AG04449 (cell line): ENCODE measurements at regions of chr15 and their contacts with region 1.

Region 1: GRCh38 chr15:67433495-67434099 is 87.3 kb upstream of the C15orf61 start:
- DNase-seq: no peak
- H3K4me3 ChIP-seq: no peak overlapping the region
- CTCF ChIP-seq: peak; percentile 83

Region 2: DNA sequence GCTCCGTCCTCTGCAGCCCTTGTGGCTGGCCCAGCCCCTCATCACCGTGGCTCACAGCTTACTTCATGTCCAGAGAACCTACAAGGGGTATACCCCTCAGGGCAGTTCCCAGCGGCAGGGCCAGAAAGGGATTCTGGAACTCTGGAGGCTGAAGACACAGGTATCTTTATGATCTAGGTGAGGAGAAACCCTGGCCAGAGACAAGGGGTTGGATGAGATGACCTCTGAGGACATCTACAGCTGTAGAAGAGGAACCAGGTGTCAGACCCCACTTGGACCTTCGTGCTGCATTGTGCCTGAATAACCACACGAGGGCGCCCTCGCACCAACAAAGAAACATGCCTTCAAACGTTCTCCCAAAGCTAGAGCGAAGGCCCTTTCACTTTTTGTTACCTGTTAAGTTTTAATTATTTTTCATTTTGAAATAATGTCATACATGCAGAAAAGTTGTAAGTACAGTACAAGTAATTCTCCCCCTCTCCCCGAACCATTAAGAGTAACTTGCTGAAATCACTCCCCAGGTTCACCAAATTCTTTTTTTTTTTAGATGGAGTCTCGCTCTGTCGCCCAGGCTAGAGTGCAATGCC is 486.9 kb before region 1 on chr15:
- CTCF ChIA-PET with region 1: interaction called, 39 read pairs
- POLR2A ChIA-PET with region 1: no interaction called
- DNase-seq: no peak
- H3K4me3 ChIP-seq: no peak overlapping the region
- CTCF ChIP-seq: peak; percentile 83

Region 3: DNA sequence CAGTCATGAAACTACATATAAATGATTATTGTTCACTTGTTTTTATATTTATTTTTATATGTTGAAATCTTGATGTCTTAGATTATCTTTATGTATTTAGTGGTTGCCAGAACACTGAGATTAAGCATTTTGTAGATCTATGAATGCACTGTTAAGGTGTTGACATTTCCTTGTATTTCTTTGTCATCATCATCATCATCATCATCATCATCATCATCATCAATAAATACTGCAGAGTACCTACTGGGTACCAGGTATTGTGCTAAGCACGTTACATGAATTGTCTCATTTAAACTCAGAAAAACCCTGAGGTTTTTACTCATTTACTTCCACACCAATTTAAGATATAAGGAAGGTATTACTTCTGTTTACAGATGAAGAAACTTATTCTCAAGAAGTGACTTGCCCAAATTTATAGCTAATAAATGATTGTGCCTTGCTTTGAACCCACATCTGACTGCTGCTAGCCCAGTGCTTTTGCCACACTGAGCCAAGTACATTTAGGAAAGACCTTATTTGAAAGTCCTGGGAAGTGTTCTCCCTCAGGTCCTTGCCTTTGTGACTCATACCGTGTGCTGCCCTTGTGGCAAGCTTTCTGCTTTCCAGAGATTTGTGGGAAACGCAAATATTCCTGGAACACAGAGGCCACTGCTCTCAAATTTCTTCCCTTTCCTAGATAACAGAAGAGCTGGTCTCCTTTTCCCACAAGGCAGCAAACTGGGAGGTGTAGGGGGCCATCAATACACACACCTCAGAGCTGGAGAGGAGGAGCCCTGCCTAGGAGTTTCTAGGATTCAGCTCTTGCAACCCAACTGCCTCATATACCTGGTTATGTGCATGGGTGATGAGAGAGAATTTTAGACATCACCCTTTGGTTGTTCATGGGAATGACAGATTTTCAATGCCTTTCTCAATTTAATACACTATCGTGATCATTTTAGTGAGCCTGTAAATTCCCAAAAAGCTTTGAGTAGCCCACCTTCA is 28.1 kb before region 1 on chr15:
- CTCF ChIA-PET with region 1: interaction called, 10 read pairs
- POLR2A ChIA-PET with region 1: no interaction called
- DNase-seq: peak; percentile 16
- H3K4me3 ChIP-seq: no peak overlapping the region
- CTCF ChIP-seq: no peak

Region 4: DNA sequence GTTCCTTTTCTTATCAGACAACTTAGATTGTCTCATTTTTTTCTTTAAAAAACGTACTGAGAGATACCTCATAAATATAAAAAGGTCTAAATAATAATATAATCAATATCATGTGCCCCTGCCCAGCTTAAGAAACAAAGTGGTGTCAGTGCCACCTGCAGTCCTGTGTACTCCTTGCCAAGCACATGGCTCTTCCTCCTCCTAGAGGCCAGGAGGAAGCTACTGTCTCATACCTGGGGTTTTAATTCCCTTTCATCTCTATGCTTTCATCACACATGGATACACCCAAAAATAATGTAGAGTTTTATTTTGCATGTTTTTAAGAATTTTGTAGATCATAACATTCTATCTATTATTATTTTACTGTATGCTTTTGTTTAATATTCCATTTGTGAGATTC is 11.3 kb before region 1 on chr15:
- CTCF ChIA-PET with region 1: interaction called, 17 read pairs
- POLR2A ChIA-PET with region 1: no interaction called
- DNase-seq: no peak
- H3K4me3 ChIP-seq: no peak overlapping the region
- CTCF ChIP-seq: no peak

Region 5: DNA sequence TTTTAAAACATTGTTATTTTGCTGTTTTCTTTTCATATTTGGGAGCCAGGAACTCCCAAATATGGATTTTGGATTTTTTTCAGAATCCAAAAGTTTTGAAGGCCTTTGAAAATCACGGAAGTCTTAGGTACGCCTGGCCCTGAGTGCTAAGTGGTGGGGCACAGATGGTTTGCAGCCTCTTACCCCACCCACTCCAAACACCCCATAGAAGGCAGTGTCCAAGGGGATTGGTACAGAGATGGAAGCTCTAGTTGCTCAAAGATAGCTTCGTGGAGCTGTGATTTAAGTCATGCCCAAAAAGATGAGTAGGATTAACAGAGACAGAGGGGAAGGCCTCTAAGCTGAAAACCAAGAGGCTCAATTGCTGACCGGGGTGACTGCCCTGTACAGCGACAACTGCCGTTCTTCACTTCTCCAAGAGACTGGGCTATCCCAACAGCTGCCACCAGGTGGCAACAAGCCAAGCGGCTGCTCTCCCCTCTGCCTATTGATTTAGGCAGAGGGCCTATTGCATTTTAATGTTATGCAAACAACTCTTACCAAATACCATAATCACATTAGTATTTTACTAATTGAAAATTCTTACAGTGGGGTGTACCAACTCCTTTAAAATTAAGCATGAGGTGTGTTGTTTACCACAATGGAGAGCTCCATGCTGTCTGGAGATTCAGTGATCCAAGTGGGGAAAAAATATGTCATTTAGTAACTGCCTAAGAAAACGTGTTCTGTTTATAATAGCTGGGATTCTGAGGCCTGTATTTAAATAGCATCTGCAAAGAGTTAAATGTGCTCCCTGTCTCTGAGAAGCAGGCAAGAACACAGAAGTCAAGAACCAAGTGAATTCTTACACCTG is 23.3 kb after region 1 on chr15:
- CTCF ChIA-PET with region 1: interaction called, 13 read pairs
- POLR2A ChIA-PET with region 1: no interaction called
- DNase-seq: no peak
- H3K4me3 ChIP-seq: no peak overlapping the region
- CTCF ChIP-seq: peak; percentile 83